Posterior cingulate gyrus (tissue), 11 donors: ENCODE measurements at regions of chr12 and their contacts with region 1.

Region 1: GRCh38 chr12:43805860-43806736 is at the start of gene TWF1:
- DNase-seq: peak; percentile 77 to 98 (median 84)

Region 2: GRCh38 chr12:43742106-43742505 is 64.0 kb before region 1 on chr12:
- intact Hi-C with region 1: no loop called
- DNase-seq: no peak

Region 3: DNA sequence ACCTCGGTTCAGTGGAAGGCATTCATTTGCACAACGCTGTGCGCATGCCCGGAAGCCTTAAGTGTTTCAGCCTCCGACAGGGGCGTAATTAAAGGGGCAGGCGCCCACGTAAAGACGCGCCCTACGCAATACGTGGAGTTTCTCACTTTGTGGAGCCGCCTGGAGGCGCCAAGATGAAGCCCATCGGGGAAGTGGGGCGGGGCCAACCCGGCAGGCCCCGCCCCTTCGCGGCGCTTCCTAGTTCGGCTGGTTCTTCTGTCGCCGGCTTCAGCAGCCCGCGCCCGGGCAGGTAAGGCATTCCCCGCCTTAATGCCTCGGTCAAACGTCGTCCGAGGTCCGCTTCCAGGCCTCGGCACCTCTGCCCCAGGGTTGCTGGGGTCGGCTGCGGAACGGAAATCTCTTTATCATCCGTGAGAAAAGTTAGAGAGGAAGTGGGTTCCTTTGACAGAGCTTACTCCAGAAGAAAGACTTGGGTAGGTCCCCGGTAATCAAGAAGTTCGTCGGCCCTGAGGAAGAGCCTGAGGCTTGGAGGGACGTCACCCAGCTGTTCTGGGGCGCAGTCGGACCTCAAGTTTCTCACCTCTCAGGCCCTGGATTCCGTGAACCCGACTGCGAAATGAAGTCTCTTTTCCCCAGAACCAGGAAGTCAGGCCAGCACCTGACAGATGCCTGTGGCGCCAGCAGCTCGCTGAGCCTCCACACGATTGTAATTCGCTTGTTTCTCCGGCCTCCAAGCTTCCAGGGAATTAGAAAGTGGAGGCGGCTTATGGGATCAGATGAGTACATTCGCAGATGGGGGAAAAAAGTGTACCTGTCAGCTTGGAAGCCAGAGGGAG is 47.2 kb before region 1 on chr12 and contains the starts of genes IRAK4 and PUS7L:
- intact Hi-C with region 1: loop called (anchors 5 kb)
- DNase-seq: peak; percentile 88 to 99 (median 94)

Region 4: DNA sequence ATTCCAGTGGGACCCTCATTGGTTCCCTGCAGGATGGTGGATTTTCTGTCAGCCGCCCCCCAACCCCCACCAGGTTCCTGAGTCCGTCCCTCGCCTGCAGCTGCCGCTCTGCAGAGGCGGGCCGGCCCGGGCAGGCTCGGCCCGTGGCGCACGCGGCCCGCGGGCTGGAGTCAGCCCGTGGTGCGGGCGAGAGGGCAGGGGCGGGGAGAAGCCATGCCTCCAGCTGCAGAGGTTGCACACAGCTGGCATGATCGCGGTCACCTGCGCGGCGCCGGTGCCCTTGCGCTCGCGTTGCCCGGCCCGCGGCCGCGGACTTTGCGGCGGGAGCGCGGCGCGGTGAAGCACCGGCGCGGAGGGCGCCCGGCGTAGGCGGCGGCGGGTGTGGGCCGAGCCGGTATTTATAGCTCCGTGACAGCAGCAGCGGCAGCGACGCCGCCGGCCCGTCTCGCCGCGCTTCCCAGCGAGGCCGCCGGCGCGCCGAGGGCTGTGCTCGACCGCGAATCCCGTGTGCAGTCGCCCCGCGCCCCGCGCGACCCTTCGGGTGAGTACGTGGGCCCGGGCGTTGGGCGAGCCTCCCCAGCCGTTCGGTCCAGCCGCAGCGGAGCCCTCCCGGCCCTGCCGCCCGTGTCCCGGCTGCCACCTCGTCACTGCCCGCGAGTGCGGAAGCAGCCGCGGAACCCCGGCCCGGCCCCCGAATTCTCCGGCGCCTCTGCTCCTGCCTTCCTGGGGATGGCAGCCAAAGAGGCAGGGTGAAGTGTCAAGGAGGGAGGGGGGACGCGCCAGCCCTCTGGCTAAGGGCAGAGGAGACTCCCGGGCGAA is 29.8 kb after region 1 on chr12 and contains the start of gene TMEM117:
- intact Hi-C with region 1: loop called (anchors 2 kb)
- DNase-seq: peak; percentile 34 to 92 (median 53)

Region 5: DNA sequence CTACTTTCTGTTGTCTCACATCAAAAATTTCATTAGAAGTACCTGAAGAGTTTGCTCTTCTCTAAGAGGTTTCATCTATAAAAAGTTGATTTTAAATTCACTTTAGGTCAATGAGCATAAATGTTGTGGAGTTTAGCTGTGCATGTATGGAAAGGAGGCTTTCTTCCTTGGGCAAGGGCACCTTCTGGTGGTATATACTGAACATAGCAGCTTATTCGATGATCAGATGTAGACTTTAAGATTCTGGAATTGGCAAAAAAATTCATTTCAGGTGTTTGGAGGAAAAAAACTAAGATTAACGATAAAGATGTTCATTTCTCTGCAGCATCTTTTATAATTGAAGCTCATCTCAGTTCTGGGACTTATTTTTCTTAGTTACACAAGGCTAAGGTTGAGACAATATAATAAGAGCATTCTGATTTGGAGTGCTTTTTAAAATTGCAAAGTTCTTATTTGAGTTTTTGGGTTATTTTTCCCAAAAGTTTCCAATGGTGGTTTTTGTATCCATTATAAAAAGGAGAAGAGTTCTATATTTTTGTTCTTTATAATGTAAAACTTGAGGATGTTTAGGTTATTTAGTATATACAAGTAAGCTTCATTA is 76.6 kb after region 1 on chr12:
- intact Hi-C with region 1: loop called (anchors 2 kb)
- DNase-seq: peak in 2 of 10 donors; percentile 6 to 23

Region 6: GRCh38 chr12:43957732-43958372 is 151.8 kb after region 1 on chr12:
- intact Hi-C with region 1: no loop called
- DNase-seq: peak in 2 of 10 donors; percentile 8 to 12